RWPE1 (cell line): ENCODE measurements at regions of chr10 and their contacts with region 1.

Region 1: GRCh38 chr10:119826771-119827170 is 45.9 kb downstream of the MCMBP start:
- DNase-seq: peak; percentile 22
- H3K27ac ChIP-seq: no peak overlapping the region
- CTCF ChIP-seq: no peak

Region 2: DNA sequence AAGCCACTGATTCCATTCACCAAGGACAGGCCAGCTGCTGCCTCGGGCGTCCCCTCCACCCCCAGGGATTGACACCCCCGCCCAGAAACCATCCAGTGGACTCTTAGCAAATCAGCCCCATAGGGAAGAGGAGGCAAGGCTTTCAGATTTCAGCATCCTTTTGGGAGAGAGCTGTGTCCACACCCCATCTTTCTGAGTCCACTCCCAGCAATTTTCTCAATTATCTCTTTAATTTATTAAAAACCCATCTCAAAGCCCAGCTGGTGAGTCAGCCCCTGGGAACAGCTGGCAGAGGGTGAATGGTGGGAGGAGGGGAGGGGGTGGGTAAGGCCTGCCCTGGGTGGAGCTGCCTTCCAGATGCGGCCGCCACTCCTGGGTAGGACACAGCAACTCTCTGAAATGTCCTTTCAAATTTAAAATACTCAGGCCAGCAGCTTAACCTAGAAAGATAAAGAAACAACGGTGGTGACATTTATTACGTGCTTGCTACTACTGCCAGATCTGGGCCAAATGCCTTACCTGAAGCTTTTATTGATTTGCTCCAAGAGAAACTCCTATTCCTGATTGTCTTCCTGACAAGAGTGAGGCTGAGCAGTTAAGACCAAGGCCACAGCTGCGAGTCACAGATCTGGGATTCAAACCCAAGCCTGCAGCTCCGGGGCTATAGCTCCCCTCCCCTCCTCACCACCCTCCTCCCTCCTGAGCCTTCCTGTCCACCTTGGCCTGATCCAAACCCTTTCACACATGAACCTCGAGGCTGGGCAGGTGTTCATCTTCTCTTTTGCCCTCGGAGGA is 404.7 kb before region 1 on chr10:
- CTCF ChIA-PET with region 1: no interaction called
- POLR2A ChIA-PET with region 1: no interaction called
- DNase-seq: no peak
- H3K27ac ChIP-seq: peak overlapping the region; percentile 40; the same call in 1 of the 2 replicates
- CTCF ChIP-seq: no peak

Region 3: GRCh38 chr10:119737827-119738226 is 88.9 kb before region 1 on chr10:
- CTCF ChIA-PET with region 1: interaction called, 10 read pairs
- POLR2A ChIA-PET with region 1: no interaction called
- DNase-seq: peak; percentile 95
- H3K27ac ChIP-seq: no peak overlapping the region
- CTCF ChIP-seq: no peak

Region 4: GRCh38 chr10:119812684-119813083 is 14.1 kb before region 1 on chr10:
- CTCF ChIA-PET with region 1: no interaction called
- POLR2A ChIA-PET with region 1: no interaction called
- DNase-seq: no peak
- H3K27ac ChIP-seq: no peak overlapping the region
- CTCF ChIP-seq: no peak